ENCODE measurements at regions of chr21 and their contacts with region 1.

Region 1: DNA sequence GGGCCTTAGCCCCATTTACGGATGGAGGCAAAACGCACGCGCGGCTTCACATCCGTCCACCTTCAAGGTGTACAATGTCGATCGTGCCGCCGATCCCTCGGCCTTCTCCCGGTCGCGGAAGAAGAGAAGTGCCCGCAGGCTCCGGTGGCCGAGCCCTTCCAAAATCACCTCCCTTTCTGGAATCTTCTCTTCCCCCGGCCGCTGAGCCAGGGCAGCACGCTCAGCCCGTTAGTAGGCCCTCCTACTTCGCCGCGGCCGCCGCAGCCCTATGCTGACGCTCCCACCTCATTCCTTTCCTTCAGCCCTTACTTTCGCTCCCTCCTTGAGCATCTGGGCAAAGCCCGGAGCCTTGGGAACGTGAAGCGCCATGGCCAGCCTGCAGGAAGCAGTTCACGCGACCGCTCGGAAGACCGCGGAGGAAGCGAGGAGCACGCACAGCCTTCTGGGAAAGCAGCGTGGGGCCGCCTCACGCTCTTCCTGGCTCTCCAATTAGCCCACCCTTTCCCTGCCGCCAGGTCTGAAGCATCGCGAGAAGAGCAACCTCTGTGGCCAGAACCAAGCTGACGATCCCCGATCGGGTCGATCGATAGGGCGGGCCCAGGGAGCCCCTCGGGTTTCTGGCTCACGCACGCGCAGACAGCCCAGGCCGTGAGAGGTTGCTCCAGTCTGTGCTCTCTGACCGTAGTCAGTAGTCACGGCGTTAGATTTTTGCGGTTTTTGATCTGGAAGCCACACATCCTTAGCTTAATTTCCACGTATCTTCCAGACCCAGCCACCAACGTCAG is at the start of gene CCT8:
- DNase-seq: peak; percentile 99
- ATAC-seq: peak; percentile 91
- H3K4me3 Mint-ChIP-seq: peak within 1 kb of the TSS; percentile 100
- H3K27ac Mint-ChIP-seq: peak within 1 kb of the TSS; percentile 100
- H3K4me1 Mint-ChIP-seq: peaks cover 47% of the 10 kb centered on the region
- H3K27me3 Mint-ChIP-seq: no peaks in the 10 kb centered on the region
- total RNA-seq, gene CCT8: 465 to 572 TPM

Region 2: GRCh38 chr21:28375708-28376385 is 697.6 kb before region 1 on chr21:
- CTCF ChIA-PET with region 1: no interaction called
- POLR2A ChIA-PET with region 1: no interaction called
- intact Hi-C with region 1: no loop called
- DNase-seq: no peak
- ATAC-seq: no peak
- H3K4me3 Mint-ChIP-seq: no peak overlapping the region
- H3K27ac Mint-ChIP-seq: no peak overlapping the region
- H3K4me1 Mint-ChIP-seq: no peaks in the 10 kb centered on the region
- H3K27me3 Mint-ChIP-seq: no peaks in the 10 kb centered on the region

Region 3: DNA sequence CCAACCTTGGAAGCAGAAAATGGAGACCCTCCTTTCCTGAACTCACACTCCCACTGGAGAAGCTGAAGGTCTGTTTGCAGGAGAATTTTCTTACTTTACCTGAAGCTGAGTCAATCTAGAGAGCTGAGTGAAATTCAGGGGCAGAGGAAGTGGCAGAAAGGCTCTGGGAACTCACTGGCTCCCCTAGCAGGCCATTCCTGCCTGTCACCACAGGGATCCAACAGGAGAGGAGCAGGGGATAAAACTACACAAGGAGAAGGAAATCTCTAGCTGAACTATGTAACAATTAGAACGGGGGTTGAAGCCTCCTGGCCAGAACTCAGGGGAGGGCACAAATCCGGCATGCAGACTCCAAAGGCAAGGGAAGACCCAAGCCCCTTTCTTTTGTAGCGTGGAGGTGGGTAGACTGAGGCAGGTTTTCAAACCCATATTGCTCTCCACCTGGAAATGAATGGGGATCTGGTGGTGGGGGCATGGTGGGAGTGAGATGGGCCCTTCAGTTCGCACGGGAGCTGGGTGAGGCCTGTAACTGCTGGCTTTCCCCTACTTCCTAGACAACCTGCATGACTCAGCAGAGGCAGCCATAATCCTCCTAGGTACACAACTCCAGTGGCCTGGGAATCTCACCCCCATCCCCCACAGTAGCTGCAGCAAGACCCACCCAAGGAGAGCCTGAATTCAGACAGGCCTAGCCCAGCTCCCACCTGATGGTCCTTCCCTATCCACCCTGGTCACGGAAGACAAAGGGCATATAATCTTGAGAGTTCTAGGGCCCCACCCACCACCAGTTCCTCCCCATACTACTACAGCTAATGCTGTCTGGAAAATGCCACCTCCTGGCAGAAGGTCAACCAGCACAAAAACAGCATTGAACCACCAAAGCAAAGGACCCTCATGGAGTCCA is 238.8 kb before region 1 on chr21:
- CTCF ChIA-PET with region 1: no interaction called
- POLR2A ChIA-PET with region 1: no interaction called
- intact Hi-C with region 1: no loop called
- DNase-seq: no peak
- ATAC-seq: no peak
- H3K4me3 Mint-ChIP-seq: no peak overlapping the region
- H3K27ac Mint-ChIP-seq: peak overlapping the region; percentile 48
- H3K4me1 Mint-ChIP-seq: peaks cover 68% of the 10 kb centered on the region
- H3K27me3 Mint-ChIP-seq: no peaks in the 10 kb centered on the region

Region 4: DNA sequence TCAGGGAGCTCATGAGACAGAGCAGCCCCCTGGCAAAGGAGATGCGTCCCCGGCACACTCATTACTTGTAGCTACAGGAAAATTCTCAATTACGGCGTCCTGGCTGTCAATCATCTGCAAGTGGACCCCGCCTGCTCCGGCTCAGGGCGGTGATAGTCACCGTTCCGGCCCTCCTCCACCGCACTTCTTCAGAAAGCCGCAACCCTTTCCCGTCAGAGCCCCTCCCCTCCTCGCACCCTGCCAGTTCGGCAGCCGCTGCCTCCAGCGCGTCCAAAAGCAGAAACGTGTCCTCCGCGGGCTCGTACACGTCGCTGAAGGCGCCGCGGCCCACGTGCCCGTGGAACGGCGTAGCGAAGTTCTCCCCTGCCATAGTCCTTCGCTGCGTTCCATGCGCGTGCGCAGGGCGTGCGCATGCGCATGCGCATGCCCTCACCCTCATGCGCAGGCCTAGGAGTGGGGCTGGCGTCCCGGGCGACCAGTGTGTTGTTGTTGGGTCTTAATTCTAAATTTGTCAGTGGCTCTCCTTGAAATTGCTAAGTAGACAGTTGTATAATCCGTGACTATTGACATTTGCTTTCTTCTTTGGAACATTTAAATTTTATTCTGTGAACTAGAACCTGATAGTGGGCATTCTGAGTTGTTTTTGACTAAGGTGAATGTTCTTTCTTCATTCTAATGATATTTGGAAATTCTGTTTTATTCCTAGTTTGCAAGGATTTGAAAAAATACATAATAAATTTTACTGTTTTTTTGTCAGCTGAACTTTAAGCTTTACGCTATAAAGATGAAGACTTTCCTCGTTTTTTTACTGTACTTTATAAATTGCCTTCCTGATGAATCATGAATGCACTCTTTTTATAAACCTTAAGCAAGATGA is 188.2 kb before region 1 on chr21:
- CTCF ChIA-PET with region 1: no interaction called
- POLR2A ChIA-PET with region 1: interaction called, 6 read pairs
- intact Hi-C with region 1: loop called (anchors 1 to 2 kb)
- DNase-seq: peak; percentile 95
- ATAC-seq: peak; percentile 96
- H3K4me3 Mint-ChIP-seq: peak overlapping the region; percentile 86
- H3K27ac Mint-ChIP-seq: peak overlapping the region; percentile 99
- H3K4me1 Mint-ChIP-seq: peaks cover 16% of the 10 kb centered on the region
- H3K27me3 Mint-ChIP-seq: no peaks in the 10 kb centered on the region

Region 5: DNA sequence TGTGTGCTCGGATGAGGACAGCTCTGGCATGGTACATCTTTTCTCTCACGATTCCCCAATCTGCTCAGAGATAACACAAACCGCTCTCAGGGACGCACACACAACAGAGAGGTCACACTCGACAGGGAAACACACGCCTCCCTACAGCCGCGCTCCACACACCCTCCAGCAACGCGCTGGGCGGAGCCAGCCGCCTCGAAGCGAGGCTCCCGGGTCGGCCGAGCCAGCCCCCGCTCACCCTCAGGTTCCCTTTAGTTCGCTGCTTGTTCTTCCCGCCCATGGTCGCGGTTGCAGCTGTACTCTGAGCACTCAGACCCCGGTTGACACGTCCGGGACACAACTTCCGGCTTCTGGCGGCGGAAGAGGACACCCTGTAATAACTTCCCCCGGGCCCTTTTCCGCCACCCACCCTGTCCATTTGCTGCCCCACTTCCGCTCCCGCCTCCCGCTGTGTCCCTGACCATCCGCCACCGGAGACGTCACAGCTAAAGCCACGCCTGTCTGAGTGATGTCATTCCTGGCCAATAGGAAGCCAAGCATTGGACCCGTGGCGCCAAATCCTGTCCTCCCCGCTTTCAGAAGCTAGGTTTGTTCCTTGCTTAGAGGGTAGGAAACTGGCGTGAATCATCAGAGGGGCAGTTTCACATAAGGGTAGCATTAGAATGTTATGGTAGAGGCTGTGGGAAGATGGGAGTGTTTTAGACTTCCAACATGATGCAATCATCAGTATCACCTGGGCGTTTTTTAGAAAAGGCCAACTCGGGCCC is 80.7 kb before region 1 on chr21 and contains the start of gene LTN1:
- CTCF ChIA-PET with region 1: interaction called, 3 read pairs
- POLR2A ChIA-PET with region 1: interaction called, 5 read pairs
- intact Hi-C with region 1: loop called (anchors 1 kb)
- DNase-seq: peak; percentile 100
- ATAC-seq: peak; percentile 92
- H3K4me3 Mint-ChIP-seq: peak within 1 kb of the TSS; percentile 83
- H3K27ac Mint-ChIP-seq: peak within 1 kb of the TSS; percentile 90
- H3K4me1 Mint-ChIP-seq: peaks cover 44% of the 10 kb centered on the region
- H3K27me3 Mint-ChIP-seq: no peaks in the 10 kb centered on the region
- total RNA-seq, gene LTN1: 26.6 to 29.4 TPM

Region 6: DNA sequence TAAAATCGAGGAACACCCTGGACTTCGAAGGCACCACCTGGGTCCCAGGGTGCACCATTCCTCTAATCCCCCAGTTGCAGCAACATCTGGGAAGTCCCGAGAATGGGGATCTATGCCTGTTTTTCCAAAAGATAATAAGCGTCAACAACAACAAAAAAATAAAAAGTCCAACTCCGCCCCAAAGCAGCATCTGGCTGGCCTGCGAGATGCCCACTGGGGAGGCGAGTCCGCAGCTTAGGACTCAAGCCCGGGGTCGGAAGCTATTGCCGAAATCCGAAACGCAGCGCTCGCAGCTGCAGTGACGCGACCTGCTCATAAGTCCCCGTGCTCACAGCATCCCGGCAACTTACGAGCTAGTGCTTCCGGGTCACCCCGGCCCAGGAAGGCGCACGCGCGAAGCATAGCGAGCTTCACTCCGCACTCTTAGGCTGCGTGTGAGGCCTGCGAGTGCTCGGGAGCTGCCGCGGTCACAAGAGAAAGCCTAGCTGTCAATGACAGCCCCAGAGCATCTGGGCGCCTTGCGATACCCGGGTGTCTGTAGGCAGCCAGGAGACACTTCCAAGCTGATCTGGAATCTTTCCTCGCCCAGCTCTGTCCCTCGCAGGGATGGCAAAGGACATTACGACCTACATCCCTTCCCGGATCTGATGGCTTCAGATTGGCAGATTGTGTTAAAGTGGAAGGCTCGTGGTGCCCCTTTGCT is 70.8 kb before region 1 on chr21:
- CTCF ChIA-PET with region 1: no interaction called
- POLR2A ChIA-PET with region 1: interaction called, 7 read pairs
- intact Hi-C with region 1: loop called (anchors 1 kb)
- DNase-seq: peak; percentile 97
- ATAC-seq: peak; percentile 100
- H3K4me3 Mint-ChIP-seq: peak overlapping the region; percentile 88
- H3K27ac Mint-ChIP-seq: peak overlapping the region; percentile 97
- H3K4me1 Mint-ChIP-seq: peaks cover 1% of the 10 kb centered on the region
- H3K27me3 Mint-ChIP-seq: no peaks in the 10 kb centered on the region

Region 7: DNA sequence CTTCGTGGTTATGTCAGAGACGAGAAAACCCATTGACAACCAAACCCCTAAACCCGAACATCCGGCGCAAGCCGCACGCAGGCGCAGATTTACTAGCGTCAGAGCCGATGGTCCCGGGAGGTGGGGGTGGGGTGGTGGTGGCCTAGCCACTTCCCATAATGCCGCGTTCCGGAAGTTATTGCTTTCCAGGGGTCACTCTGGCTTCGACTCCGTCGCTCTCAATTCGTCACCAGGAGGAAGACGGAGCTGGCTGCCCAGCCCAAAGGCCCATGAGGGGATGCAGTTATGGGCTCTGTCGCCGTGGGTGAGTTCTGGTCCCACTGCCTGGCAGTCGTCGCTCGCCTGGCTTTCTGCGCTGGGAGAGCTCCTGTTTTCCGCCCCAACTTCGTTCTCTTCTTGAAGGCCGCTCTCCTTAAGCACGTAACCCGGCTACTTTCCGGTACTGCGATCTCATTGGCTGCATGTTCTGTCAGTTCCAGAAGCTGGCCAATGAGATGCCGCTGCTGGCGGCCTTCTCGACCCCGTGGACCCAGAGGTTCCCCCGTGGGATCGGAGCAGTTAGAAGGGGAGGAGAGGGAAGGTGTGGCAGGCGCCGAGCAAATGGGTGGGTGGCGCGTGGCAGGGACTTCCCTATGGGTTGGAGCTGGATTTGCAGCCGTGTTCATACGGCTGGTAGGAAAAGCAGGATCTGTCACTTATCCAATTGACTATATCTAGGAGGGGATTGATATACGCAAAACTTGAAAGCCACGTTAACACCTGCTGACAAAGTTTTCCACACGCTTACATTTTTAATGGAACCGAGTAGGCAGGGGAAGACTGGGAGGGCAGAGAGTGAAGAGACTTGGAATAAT is 48.7 kb before region 1 on chr21 and contains the start of gene USP16:
- CTCF ChIA-PET with region 1: interaction called, 4 read pairs
- POLR2A ChIA-PET with region 1: interaction called, 10 read pairs
- intact Hi-C with region 1: loop called (anchors 1 kb)
- DNase-seq: peak; percentile 94
- ATAC-seq: peak; percentile 95
- H3K4me3 Mint-ChIP-seq: peak within 1 kb of the TSS; percentile 90
- H3K27ac Mint-ChIP-seq: peak within 1 kb of the TSS; percentile 96
- H3K4me1 Mint-ChIP-seq: peaks cover 46% of the 10 kb centered on the region
- H3K27me3 Mint-ChIP-seq: no peaks in the 10 kb centered on the region
- total RNA-seq, gene USP16: 41.1 to 41.7 TPM

Region 8: GRCh38 chr21:29056005-29056404 is 17.4 kb before region 1 on chr21:
- CTCF ChIA-PET with region 1: interaction called, 5 read pairs
- POLR2A ChIA-PET with region 1: interaction called, 4 read pairs
- intact Hi-C with region 1: loop called in 1 of 2 experiments (anchors 2 kb)
- DNase-seq: no peak
- ATAC-seq: no peak
- H3K4me3 Mint-ChIP-seq: no peak overlapping the region
- H3K27ac Mint-ChIP-seq: no peak overlapping the region
- H3K4me1 Mint-ChIP-seq: no peaks in the 10 kb centered on the region
- H3K27me3 Mint-ChIP-seq: no peaks in the 10 kb centered on the region

Region 9: GRCh38 chr21:29135481-29135880 is 62.1 kb after region 1 on chr21:
- CTCF ChIA-PET with region 1: no interaction called
- POLR2A ChIA-PET with region 1: no interaction called
- intact Hi-C with region 1: no loop called
- DNase-seq: no peak
- ATAC-seq: no peak
- H3K4me3 Mint-ChIP-seq: no peak overlapping the region
- H3K27ac Mint-ChIP-seq: no peak overlapping the region
- H3K4me1 Mint-ChIP-seq: no peaks in the 10 kb centered on the region
- H3K27me3 Mint-ChIP-seq: no peaks in the 10 kb centered on the region

Region 10: DNA sequence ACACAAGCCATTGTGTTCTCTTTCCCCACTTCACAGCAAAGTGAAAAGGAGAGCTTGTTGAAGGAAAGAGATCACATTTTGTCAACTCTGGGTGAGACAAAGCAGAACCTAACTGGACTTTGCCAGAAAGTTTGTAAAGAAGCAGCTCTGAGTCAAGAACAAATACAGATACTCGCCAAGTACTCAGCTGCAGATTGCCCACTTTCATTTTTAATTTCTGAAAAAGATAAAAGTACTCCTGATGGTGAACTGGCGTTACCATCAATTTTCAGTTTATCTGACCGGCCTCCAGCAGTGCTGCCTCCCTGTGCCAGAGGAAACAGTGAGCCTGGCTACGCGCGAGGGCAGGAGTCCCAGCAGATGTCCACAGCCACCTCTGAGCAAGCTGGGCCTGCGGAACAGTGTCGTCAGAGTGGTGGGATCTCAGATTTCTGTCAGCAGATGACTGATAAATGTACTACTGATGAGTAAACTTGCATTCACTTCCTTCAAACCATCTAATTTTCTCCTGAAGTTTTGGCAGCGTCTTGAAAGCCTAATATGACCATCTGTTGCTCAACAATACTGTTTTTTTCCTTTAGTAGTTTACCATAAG is 269.0 kb after region 1 on chr21:
- CTCF ChIA-PET with region 1: no interaction called
- POLR2A ChIA-PET with region 1: no interaction called
- intact Hi-C with region 1: loop called in 1 of 2 experiments (anchors 5 kb)
- DNase-seq: peak; percentile 79
- ATAC-seq: peak; percentile 94
- H3K4me3 Mint-ChIP-seq: peak overlapping the region; percentile 29
- H3K27ac Mint-ChIP-seq: peak overlapping the region; percentile 79
- H3K4me1 Mint-ChIP-seq: peaks cover 42% of the 10 kb centered on the region
- H3K27me3 Mint-ChIP-seq: no peaks in the 10 kb centered on the region

Region 11: DNA sequence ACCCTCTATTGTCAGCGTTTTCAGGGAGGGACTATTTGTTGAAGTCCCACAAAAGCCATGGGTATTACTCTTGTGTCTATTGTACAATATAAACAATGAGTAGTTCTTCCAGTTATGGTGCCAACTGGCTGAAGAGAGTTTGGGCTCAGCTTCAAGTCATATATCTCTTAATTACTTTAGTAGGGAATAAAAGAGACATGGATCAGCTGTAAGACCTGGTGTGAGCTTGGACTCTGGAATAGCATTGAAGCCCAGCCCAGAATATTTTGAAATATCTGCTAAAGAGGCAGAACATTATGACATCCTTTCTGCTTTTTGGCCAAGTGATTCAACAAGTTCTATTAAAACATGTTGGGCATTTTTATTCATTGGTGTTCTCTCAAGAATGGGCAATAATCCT is 450.2 kb after region 1 on chr21:
- CTCF ChIA-PET with region 1: no interaction called
- POLR2A ChIA-PET with region 1: no interaction called
- intact Hi-C with region 1: no loop called
- DNase-seq: no peak
- ATAC-seq: no peak
- H3K4me3 Mint-ChIP-seq: no peak overlapping the region
- H3K27ac Mint-ChIP-seq: no peak overlapping the region
- H3K4me1 Mint-ChIP-seq: no peaks in the 10 kb centered on the region
- H3K27me3 Mint-ChIP-seq: no peaks in the 10 kb centered on the region

Measured in activated CD4-positive, alpha-beta T cell treated with anti-CD3 and anti-CD28 coated beads for 36 hours (primary cell).